Ascending aorta (tissue), 2 donors: ENCODE measurements at regions of chr7 and their contacts with region 1.

Region 1: DNA sequence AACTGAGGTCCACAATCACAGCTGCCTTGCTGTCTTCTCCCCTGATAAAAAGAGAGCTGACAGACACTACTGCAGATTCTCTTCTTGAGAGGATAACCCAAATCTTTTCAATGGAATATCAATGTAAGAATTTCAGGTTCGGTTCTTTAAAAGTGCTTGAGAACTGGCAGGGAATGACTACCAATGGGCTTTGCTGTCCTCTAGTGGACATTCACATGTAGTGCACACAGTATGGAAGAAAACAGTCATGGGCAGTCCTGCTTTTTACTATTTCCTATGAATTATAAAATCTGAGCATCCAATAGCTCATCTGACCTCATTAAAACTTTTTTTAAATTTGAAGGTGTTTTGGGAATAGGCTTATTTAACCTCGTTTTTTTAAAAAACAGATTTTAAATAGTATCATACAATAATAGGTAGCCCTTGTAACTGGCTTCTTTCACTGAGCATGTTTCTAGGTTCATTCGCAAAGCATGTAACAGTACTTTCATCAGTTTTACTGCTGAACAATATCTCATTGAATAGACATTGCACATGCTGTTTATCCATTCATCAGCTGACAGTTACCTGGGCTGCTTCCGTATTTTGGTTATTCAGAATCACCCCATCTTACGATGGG is 18.3 kb downstream of the FZD9 start:
- DNase-seq: no peak
- H3K4me3 ChIP-seq: no peak overlapping the region
- H3K27ac ChIP-seq: no peak overlapping the region
- H3K4me1 ChIP-seq: no peaks in the 10 kb centered on the region
- H3K27me3 ChIP-seq: no peaks in the 10 kb centered on the region
- CTCF ChIP-seq: peak; percentile 88 to 98 (median 97)

Region 2: DNA sequence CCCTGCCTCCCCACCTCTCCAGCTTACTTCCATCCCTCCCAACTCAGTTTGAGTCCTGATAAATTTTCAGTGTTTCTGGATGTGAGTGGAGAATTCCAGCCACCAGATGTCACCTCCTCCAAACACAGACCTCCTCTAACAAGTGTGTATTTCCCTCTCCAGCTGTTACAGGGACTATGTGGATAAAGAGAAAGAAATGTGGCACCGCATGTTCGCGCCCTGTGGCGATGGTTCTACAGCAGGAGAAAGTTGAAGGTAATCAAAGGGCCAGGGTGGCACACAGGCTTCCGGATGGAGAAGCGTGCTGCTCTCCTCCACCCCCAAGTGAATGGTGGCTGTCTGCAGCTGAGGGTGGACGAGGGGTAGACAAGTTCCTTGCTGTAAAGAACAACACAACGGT is 109.2 kb before region 1 on chr7:
- intact Hi-C with region 1: loop called (anchors 1 kb)
- DNase-seq: no peak
- H3K4me3 ChIP-seq: peak overlapping the region; percentile 5 to 43
- H3K27ac ChIP-seq: no peak overlapping the region
- H3K4me1 ChIP-seq: no peaks in the 10 kb centered on the region
- H3K27me3 ChIP-seq: no peaks in the 10 kb centered on the region
- CTCF ChIP-seq: peak; percentile 41 to 74 (median 48)

Region 3: GRCh38 chr7:73397521-73398281 is 54.2 kb before region 1 on chr7:
- intact Hi-C with region 1: no loop called
- DNase-seq: peak in 1 of 2 donors; percentile 68
- H3K4me3 ChIP-seq: peak overlapping the region in 1 of 2 donors; percentile 50
- H3K27ac ChIP-seq: peak overlapping the region; percentile 57 to 71
- H3K4me1 ChIP-seq: peaks cover 3 to 5% of the 10 kb centered on the region in 2 donors
- H3K27me3 ChIP-seq: no peaks in the 10 kb centered on the region
- CTCF ChIP-seq: no peak